ENCODE measurements at regions of chr5 and their contacts with region 1.

Region 1: GRCh38 chr5:156640691-156641241 is 209.3 kb upstream of the PPP1R2B start:
- DNase-seq: no peak
- ATAC-seq: peak; percentile 58
- H3K4me3 ChIP-seq: no peak overlapping the region
- H3K27ac ChIP-seq: peak overlapping the region in 1 of 2 donors; percentile 57
- H3K4me1 ChIP-seq: peaks cover 1 to 2% of the 10 kb centered on the region in 2 donors
- H3K27me3 ChIP-seq: no peaks in the 10 kb centered on the region

Region 2: GRCh38 chr5:156584528-156585270 is 56.1 kb before region 1 on chr5:
- intact Hi-C with region 1: loop called (anchors 10 kb)
- DNase-seq: no peak
- ATAC-seq: peak; percentile 83
- H3K4me3 ChIP-seq: no peak overlapping the region
- H3K27ac ChIP-seq: peak overlapping the region; percentile 21 to 76
- H3K4me1 ChIP-seq: peaks cover 0 to 6% of the 10 kb centered on the region in 2 donors
- H3K27me3 ChIP-seq: no peaks in the 10 kb centered on the region

Region 3: GRCh38 chr5:156824800-156825199 is 184.0 kb after region 1 on chr5:
- intact Hi-C with region 1: no loop called
- DNase-seq: no peak
- ATAC-seq: no peak
- H3K4me3 ChIP-seq: no peak overlapping the region
- H3K27ac ChIP-seq: no peak overlapping the region
- H3K4me1 ChIP-seq: no peaks in the 10 kb centered on the region
- H3K27me3 ChIP-seq: no peaks in the 10 kb centered on the region

Measured in aorta (tissue), 5 donors.